Activated T-helper 2 cell treated with anti-CD3 and anti-CD28 coated beads, Interferon-gamma antibody, Interleukin-2, Interleukin-4, amounts not matched to agents 10 μg/mL and 5 μg/mL and 100 μg/mL, durations not matched to agents 14 hours and 24 hours and 36 hours (primary cell): ENCODE measurements at regions of chr17 and their contacts with region 1.

Region 1: GRCh38 chr17:4366327-4367063 is at the start of gene UBE2G1:
- DNase-seq: peak; percentile 98
- H3K4me3 Mint-ChIP-seq: peak within 1 kb of the TSS; percentile 67
- H3K27ac Mint-ChIP-seq: peak within 1 kb of the TSS; percentile 94
- H3K4me1 Mint-ChIP-seq: peaks cover 22% of the 10 kb centered on the region
- H3K27me3 Mint-ChIP-seq: no peaks in the 10 kb centered on the region
- total RNA-seq, gene UBE2G1: 74.1 and 74.5 TPM in 2 replicates

Region 2: GRCh38 chr17:4263282-4264215 is 102.9 kb before region 1 on chr17 and contains the start of gene ANKFY1:
- intact Hi-C with region 1: loop called (anchors 5 kb)
- DNase-seq: peak; percentile 98
- H3K4me3 Mint-ChIP-seq: peak within 1 kb of the TSS; percentile 87
- H3K27ac Mint-ChIP-seq: peak within 1 kb of the TSS; percentile 81
- H3K4me1 Mint-ChIP-seq: peaks cover 23% of the 10 kb centered on the region
- H3K27me3 Mint-ChIP-seq: no peaks in the 10 kb centered on the region
- total RNA-seq, gene ANKFY1: 50.6 and 51.9 TPM in 2 replicates

Region 3: GRCh38 chr17:4332296-4333121 is 34.0 kb before region 1 on chr17:
- intact Hi-C with region 1: no loop called
- DNase-seq: no peak
- H3K4me3 Mint-ChIP-seq: no peak overlapping the region
- H3K27ac Mint-ChIP-seq: peak overlapping the region; percentile 42
- H3K4me1 Mint-ChIP-seq: peaks cover 40% of the 10 kb centered on the region
- H3K27me3 Mint-ChIP-seq: no peaks in the 10 kb centered on the region

Region 4: DNA sequence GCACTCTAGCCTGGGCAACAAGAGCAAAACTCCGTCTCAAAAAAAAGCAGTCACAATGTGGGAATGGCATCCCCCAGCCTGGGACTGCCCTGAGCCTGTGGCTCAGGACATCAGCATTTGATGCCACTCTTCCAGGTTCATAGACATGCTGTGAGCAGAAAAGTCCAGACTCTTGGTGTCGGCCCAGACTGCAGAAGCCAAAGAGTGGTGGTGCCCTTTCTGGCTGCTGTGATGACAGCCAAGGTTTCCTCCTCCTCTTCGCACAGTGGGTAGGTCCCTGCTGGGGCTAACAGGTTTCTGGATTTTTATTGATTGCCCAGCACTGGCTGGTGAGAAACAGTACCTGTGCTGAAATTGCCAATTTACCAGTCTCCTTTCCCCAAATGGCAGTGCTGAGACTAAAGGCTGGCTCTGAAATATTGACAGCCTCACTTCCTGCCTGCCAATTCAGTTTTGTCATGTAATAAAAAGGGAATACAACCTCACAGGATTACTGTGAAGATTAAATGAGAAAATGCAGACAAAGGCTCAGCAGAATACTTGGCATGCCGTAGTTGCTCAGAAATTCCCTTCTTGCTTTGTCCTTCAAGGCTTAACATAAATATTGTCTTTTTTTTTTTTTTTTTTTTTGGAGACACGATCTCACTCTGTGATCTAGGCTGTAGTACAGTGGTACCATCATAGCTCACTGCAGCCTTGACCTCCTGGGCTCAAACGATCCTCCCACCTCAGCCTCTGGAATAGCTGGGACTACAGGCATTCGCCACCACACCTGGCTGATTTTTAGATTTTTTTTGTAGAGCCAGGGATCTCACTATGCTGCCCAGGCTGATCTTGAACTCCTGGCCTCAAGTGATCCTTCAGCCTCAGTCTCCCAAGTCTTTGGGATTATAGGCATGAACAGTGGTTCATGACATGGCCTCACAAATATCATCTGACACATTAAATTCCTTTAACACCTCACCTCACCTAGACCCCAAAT is 15.5 kb after region 1 on chr17:
- intact Hi-C with region 1: no loop called
- DNase-seq: no peak
- H3K4me3 Mint-ChIP-seq: no peak overlapping the region
- H3K27ac Mint-ChIP-seq: no peak overlapping the region
- H3K4me1 Mint-ChIP-seq: peaks cover 20% of the 10 kb centered on the region
- H3K27me3 Mint-ChIP-seq: no peaks in the 10 kb centered on the region

Region 5: GRCh38 chr17:4394208-4395110 is 28.0 kb after region 1 on chr17:
- intact Hi-C with region 1: loop called (anchors 2 kb)
- DNase-seq: no peak
- H3K4me3 Mint-ChIP-seq: no peak overlapping the region
- H3K27ac Mint-ChIP-seq: no peak overlapping the region
- H3K4me1 Mint-ChIP-seq: peaks cover 25% of the 10 kb centered on the region
- H3K27me3 Mint-ChIP-seq: no peaks in the 10 kb centered on the region

Region 6: DNA sequence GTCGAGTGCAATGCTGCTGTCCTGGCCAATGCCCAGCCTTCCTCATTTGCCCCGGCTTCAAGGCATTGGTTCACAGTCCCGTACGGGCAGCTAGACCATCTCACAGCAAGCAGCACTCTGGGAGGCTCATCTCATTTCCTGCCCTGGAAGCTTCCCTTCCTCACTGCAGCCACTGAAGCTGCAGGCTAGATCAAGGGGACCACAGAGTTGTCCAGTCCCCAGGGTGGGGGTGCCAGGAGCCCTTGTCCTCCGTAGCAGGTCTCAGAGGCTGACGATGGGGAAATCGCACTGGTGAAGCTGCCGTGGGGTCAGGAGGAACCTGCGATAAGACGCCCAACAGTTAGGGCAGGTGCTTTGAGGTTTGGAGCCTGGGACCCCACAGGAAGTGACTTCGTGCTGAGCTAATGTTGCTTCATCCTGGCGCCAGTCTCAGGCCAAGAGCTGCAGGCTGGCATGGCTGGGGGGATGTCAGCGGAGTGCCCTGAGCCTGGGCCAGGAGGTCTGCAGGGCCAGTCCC is 67.1 kb after region 1 on chr17 and contains the start of gene SPNS3:
- intact Hi-C with region 1: no loop called
- DNase-seq: peak; percentile 30
- H3K4me3 Mint-ChIP-seq: peak within 1 kb of the TSS; percentile 68
- H3K27ac Mint-ChIP-seq: peak within 1 kb of the TSS; percentile 75
- H3K4me1 Mint-ChIP-seq: peaks cover 29% of the 10 kb centered on the region
- H3K27me3 Mint-ChIP-seq: peaks cover 2% of the 10 kb centered on the region
- total RNA-seq, gene SPNS3: 2.8 and 3.3 TPM in 2 replicates